ENCODE measurements at regions of chr4 and their contacts with region 1.

Region 1: GRCh38 chr4:185640811-185641675 is 105.7 kb upstream of the PDLIM3 start:
- DNase-seq: peak; percentile 50
- H3K4me3 ChIP-seq: no peak overlapping the region
- H3K27ac ChIP-seq: peak overlapping the region in 1 of 2 experiments; percentile 53; a peak in 2 of 4 replicates
- H3K4me1 ChIP-seq: peaks cover 0 to 25% of the 10 kb centered on the region in 2 experiments; a peak in 2 of 4 replicates
- H3K27me3 ChIP-seq: no peaks in the 10 kb centered on the region
- CTCF ChIP-seq: peak; percentile 72
- EP300 ChIP-seq: no peak
- RAD21 ChIP-seq: peak; percentile 75

Region 2: GRCh38 chr4:185227131-185227551 is 413.9 kb before region 1 on chr4:
- CTCF ChIA-PET with region 1: no interaction called
- POLR2A ChIA-PET with region 1: no interaction called
- DNase-seq: no peak
- H3K4me3 ChIP-seq: no peak overlapping the region
- H3K27ac ChIP-seq: no peak overlapping the region
- H3K4me1 ChIP-seq: peaks cover 5 to 6% of the 10 kb centered on the region in 2 experiments
- H3K27me3 ChIP-seq: no peaks in the 10 kb centered on the region
- CTCF ChIP-seq: peak; percentile 13; the same call in 1 of the 2 replicates
- EP300 ChIP-seq: no peak
- RAD21 ChIP-seq: peak; percentile 51

Region 3: DNA sequence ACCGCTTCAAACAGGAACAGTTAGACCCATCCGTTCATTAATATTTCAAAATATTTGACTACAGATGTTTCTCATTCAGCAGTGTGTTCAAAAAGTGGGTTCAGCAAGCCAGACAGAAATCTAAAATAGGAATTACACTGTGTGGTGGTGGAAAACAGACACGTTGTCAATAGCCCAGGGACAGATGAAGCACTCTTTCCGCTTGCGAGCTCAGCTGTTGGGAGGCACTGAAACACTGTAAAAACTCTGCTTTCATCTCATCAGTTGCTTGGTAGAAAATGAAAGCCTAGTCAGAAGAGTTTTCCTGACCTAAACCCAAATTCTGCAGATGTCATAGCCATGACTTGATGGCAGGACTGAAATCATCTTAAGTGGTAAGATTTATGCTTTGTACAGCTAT is 283.8 kb before region 1 on chr4:
- CTCF ChIA-PET with region 1: no interaction called
- POLR2A ChIA-PET with region 1: no interaction called
- DNase-seq: no peak
- H3K4me3 ChIP-seq: no peak overlapping the region
- H3K27ac ChIP-seq: peak overlapping the region; percentile 78 to 98
- H3K4me1 ChIP-seq: peaks cover 8 to 21% of the 10 kb centered on the region in 2 experiments
- H3K27me3 ChIP-seq: no peaks in the 10 kb centered on the region
- CTCF ChIP-seq: no peak
- EP300 ChIP-seq: no peak
- RAD21 ChIP-seq: no peak

Region 4: GRCh38 chr4:185457136-185457535 is 183.9 kb before region 1 on chr4:
- CTCF ChIA-PET with region 1: no interaction called
- POLR2A ChIA-PET with region 1: no interaction called
- DNase-seq: no peak
- H3K4me3 ChIP-seq: no peak overlapping the region
- H3K27ac ChIP-seq: no peak overlapping the region
- H3K4me1 ChIP-seq: no peaks in the 10 kb centered on the region
- H3K27me3 ChIP-seq: no peaks in the 10 kb centered on the region
- CTCF ChIP-seq: no peak
- EP300 ChIP-seq: no peak
- RAD21 ChIP-seq: no peak

Region 5: DNA sequence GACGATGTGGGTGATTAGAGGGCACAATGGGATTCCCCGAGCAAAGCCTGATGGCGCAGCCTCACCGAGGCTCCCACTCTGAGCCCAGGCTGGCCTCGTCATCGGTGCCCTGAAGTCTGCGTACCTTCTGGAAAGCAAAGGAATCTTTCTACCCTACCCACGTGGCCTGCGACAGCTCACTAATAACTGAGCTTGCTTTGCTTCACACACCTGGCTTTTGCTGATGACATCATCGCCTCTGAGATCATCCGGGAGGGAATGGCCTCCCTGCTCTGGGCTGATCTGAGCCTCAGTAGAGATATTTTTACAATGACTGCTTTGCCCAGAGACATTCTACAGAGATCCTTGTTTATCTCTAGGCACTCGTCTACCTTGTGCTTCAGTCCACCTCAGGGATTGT is 60.3 kb before region 1 on chr4:
- CTCF ChIA-PET with region 1: no interaction called
- POLR2A ChIA-PET with region 1: no interaction called
- DNase-seq: no peak
- H3K4me3 ChIP-seq: no peak overlapping the region
- H3K27ac ChIP-seq: no peak overlapping the region
- H3K4me1 ChIP-seq: peaks cover 0 to 8% of the 10 kb centered on the region in 2 experiments; a peak in 2 of 4 replicates
- H3K27me3 ChIP-seq: no peaks in the 10 kb centered on the region
- CTCF ChIP-seq: no peak
- EP300 ChIP-seq: no peak
- RAD21 ChIP-seq: no peak

Region 6: DNA sequence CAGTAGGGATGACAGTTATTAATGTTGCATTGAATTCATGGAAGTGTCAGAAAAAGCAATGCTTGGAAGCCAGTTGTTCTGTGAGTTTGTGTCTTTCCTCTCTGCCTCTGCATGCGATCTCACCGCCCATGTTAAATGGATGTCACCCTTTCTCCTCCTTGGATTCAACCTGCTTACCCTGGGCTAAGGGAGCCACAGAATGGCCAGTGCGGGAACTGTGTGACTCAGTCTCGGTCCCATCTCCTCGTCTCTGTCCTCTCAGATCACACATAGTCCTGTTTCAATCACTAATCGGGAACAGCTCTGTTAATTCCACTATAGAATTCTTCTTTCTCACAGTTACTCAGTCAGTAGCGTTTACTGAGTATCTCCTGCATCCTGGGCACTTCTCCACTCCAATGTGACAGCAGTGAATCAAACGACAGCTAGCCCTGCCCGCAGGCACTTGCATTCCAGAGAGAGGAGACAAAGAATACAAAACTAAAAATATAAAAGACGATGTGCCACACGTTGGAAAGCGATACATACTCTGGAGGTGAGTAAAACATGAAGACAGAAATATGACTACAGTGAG is 374.3 kb after region 1 on chr4:
- CTCF ChIA-PET with region 1: interaction called, 128 read pairs
- POLR2A ChIA-PET with region 1: interaction called, 7 read pairs
- DNase-seq: no peak
- H3K4me3 ChIP-seq: no peak overlapping the region
- H3K27ac ChIP-seq: no peak overlapping the region
- H3K4me1 ChIP-seq: peaks cover 0 to 3% of the 10 kb centered on the region in 2 experiments; a peak in 1 of 4 replicates
- H3K27me3 ChIP-seq: no peaks in the 10 kb centered on the region
- CTCF ChIP-seq: no peak
- EP300 ChIP-seq: no peak
- RAD21 ChIP-seq: peak; percentile 48

Region 7: GRCh38 chr4:186029571-186030398 is 388.7 kb after region 1 on chr4:
- CTCF ChIA-PET with region 1: interaction called, 17 read pairs
- POLR2A ChIA-PET with region 1: no interaction called
- DNase-seq: peak; percentile 73
- H3K4me3 ChIP-seq: no peak overlapping the region; a peak in 1 of 4 replicates
- H3K27ac ChIP-seq: peak overlapping the region in 1 of 2 experiments; percentile 96; a peak in 2 of 4 replicates
- H3K4me1 ChIP-seq: peaks cover 0 to 29% of the 10 kb centered on the region in 2 experiments; a peak in 2 of 4 replicates
- H3K27me3 ChIP-seq: no peaks in the 10 kb centered on the region; the same call in 1 of the 2 replicates
- CTCF ChIP-seq: no peak
- EP300 ChIP-seq: peak in 1 of 2 experiments; percentile 39; a peak in 1 of 4 replicates
- RAD21 ChIP-seq: no peak

Measured in SK-N-SH (cell line).